Posterior vena cava (tissue), 2 donors: ENCODE measurements at regions of chr4 and their contacts with region 1.

Region 1: DNA sequence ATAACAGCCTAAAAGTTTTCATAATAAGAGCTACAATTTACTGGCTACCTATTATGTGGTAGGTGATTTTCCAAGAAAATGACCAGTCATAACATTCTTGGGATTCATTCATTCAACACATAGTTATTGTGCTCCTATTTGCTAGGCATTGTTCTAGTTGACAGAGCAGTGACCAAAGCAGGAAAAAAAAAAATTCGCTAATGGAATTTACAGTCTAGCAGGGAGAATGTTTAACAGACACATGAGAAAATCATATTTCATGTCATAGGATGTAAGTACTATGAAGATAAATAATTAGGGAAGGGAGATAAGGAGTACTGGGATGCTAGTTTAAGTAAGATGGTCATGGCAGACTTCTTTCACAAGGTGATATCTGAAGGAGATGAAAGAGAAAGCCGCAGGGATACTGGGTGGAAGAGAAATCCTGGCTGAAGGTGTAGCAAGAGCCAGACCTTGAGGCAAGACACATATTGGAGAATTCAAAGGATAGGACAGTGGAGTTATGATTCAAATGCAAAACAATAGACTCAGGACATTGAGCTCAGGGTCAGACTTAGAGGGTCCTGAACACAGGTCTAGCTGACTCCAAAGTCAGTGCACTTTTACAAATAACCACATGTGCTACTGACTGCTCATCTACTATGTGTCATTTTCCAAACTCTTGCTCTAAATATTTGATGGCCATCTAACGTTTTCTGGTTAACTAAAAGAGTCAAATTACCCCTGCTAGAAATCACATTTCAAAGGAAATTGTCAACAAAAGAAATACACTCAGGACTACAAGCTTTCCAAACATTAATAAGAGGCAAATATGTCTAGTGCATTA is 20.4 kb downstream of the SPCS3 start:
- DNase-seq: no peak

Region 2: DNA sequence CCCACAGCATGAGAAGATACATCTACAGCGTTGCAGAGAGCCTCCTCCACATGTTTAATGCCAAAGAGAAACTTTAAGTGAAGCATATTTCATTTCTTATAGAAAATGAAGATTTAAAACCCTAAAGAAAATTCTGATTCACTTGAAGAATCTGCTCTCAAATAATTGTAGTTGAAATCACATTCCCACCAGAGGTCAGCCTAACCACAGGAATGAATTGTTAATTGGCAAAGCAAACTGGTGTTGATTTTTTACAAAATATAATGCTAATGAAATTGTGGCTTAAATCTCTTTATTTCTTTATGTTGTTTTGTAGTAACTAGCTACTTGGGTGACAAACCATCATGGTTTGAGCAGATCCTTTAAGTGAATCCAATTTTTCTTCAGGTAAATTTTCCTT is 305.6 kb before region 1 on chr4:
- intact Hi-C with region 1: loop called (anchors 10 kb)
- DNase-seq: no peak

Region 3: DNA sequence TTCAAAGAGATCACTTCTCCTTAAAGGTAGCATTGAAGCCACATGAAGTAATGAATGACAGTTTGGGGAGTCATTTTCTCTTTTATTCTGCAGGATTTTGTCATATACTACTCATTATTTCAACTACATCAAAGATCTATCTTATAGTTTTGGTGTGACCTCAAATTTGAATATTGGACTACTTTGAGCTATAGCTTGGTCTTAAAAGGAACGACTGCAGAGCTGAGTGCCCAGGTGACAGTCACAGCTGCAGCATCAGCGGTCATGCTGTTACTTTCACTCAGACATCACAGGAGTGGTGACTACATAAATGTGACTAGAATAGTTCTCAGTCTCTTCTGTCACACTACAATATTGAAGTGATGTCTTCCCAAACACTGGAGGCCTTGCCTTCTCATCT is 31.1 kb before region 1 on chr4:
- intact Hi-C with region 1: no loop called
- DNase-seq: no peak